Naive thymus-derived CD4-positive, alpha-beta T cell (primary cell): ENCODE measurements at regions of chr4 and their contacts with region 1.

Region 1: DNA sequence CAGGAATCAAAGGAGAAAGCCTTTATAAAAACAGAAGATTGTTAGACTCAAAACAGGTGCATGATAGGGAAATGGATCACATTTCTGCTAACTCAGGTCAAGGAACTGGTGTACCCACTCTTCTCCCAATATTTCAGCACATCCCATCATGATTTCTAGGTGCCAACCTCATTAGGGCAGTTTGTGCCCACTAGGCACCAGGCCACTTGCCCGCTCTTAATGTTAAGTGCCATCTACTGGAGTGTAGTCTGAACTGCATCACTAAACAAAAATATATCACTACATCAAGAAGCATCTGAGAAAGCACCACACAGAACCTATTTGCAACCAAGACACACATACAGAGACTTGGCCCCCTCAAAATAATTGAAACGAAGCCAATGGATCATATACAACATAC is 140.4 kb upstream of the GRID2 start:
- DNase-seq: no peak
- ATAC-seq: no peak
- H3K4me3 ChIP-seq: no peak overlapping the region
- H3K4me3 Mint-ChIP-seq: no peak overlapping the region
- H3K27ac ChIP-seq: no peak overlapping the region
- H3K27ac Mint-ChIP-seq: no peak overlapping the region
- H3K4me1 ChIP-seq: no peaks in the 10 kb centered on the region
- H3K4me1 Mint-ChIP-seq: no peaks in the 10 kb centered on the region
- H3K27me3 ChIP-seq: no peaks in the 10 kb centered on the region
- H3K27me3 Mint-ChIP-seq: no peaks in the 10 kb centered on the region

Region 2: DNA sequence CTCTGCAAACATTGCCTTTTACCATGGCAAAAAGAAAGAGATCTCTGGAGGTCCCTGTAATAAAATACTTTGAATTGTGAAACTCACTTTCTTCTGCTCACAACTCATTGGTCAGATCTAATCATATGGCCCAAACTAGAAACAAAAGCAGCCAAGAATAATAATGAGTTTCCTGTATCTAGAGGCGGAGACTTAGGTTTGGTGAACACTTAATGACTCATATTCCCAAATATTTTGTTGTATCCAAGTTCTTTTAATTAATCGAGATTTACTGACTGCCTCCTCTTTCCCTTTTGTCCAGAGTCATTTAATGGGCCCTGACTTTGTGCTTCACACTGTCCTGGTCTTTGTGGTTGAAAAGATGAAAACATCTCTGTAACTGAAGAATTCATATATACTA is 1845.6 kb before region 1 on chr4:
- CTCF ChIA-PET with region 1: no interaction called
- POLR2A ChIA-PET with region 1: no interaction called
- intact Hi-C with region 1: loop called in 1 of 2 experiments (anchors 5 kb)
- DNase-seq: no peak
- ATAC-seq: no peak
- H3K4me3 ChIP-seq: no peak overlapping the region
- H3K4me3 Mint-ChIP-seq: no peak overlapping the region
- H3K27ac ChIP-seq: no peak overlapping the region
- H3K27ac Mint-ChIP-seq: no peak overlapping the region
- H3K4me1 ChIP-seq: no peaks in the 10 kb centered on the region
- H3K4me1 Mint-ChIP-seq: peaks cover 0 to 2% (median 0%) of the 10 kb centered on the region in 7 donors
- H3K27me3 ChIP-seq: no peaks in the 10 kb centered on the region
- H3K27me3 Mint-ChIP-seq: no peaks in the 10 kb centered on the region